Panc1 (cell line): ENCODE measurements at regions of chr19 and their contacts with region 1.

Region 1: GRCh38 chr19:53977429-53977990 is 13.9 kb upstream of the CACNG6 start:
- DNase-seq: peak; percentile 81
- ATAC-seq: peak; percentile 10
- H3K4me3 ChIP-seq: peak overlapping the region; percentile 54 to 79
- H3K27ac ChIP-seq: peak overlapping the region; percentile 90
- H3K4me1 ChIP-seq: peaks cover 10% of the 10 kb centered on the region
- H3K27me3 ChIP-seq: no peaks in the 10 kb centered on the region
- CTCF ChIP-seq: no peak

Region 2: GRCh38 chr19:53906211-53907192 is 71.0 kb before region 1 on chr19:
- CTCF ChIA-PET with region 1: no interaction called
- POLR2A ChIA-PET with region 1: no interaction called
- in situ Hi-C with region 1: no loop called
- intact Hi-C with region 1: loop called (anchors 2 kb)
- DNase-seq: no peak
- ATAC-seq: peak; percentile 47
- H3K4me3 ChIP-seq: peak overlapping the region; percentile 33 to 53
- H3K27ac ChIP-seq: peak overlapping the region; percentile 36; the same call in 1 of the 2 replicates
- H3K4me1 ChIP-seq: peaks cover 23% of the 10 kb centered on the region
- H3K27me3 ChIP-seq: no peaks in the 10 kb centered on the region
- CTCF ChIP-seq: peak; percentile 99

Region 3: DNA sequence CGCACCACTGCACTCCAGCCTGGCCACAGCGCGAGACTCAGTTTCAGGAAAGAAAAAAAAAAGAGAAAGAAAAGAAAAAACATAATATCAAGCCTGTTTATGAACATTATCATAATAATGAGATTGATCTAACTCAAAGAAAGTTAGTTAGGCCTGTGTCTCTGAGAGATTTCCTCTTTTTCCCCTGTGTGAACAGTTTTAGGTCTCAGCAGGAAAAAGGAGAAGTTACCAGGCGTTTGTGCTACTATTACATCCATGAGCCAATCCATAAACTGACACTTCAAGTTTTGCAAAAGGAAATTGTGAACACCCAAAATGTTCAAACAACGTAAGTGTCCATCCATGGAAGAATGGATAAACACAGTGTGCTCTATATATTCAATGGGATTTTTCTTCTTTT is 99.8 kb after region 1 on chr19:
- CTCF ChIA-PET with region 1: no interaction called
- POLR2A ChIA-PET with region 1: interaction called, 12 read pairs
- in situ Hi-C with region 1: no loop called
- intact Hi-C with region 1: no loop called
- DNase-seq: no peak
- ATAC-seq: no peak
- H3K4me3 ChIP-seq: no peak overlapping the region
- H3K27ac ChIP-seq: no peak overlapping the region
- H3K4me1 ChIP-seq: no peaks in the 10 kb centered on the region
- H3K27me3 ChIP-seq: no peaks in the 10 kb centered on the region
- CTCF ChIP-seq: no peak